H1 (cell line): ENCODE measurements at regions of chr2 and their contacts with region 1.

Region 1: GRCh38 chr2:216519154-216519762 is 20.6 kb downstream of the RPL37A start:
- DNase-seq: peak in 1 of 2 experiments; percentile 61
- H3K4me3 ChIP-seq: no peak overlapping the region
- H3K27ac ChIP-seq: no peak overlapping the region
- H3K4me1 ChIP-seq: no peaks in the 10 kb centered on the region; a peak in 1 of 7 replicates
- H3K27me3 ChIP-seq: no peaks in the 10 kb centered on the region
- CTCF ChIP-seq: peak in 2 of 3 experiments; percentile 73 to 76; a peak in 3 of 4 replicates
- EP300 ChIP-seq: no peak
- POLR2A ChIP-seq: no peak
- RAD21 ChIP-seq: peak; percentile 86 to 88

Region 2: DNA sequence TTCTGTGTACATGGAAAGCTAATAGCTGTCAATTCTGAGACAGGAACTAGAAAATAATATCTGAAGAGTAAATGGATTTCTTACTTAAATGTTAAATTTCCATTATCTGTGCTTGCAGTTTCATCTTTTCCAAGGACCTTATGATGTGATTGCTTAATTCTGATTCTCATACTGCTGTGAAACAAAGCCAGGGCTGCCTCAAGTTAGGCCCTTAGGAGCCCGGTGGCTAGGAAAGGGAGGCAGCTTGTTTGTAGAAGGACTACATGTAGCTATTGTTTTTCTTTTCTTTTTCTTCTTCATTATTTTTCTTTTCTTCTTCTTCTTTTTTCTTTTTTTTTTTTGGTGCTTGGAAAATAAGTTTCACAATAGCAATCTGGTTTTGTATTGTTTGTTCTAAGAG is 359.6 kb before region 1 on chr2:
- CTCF ChIA-PET with region 1: no interaction called
- POLR2A ChIA-PET with region 1: no interaction called
- DNase-seq: no peak
- H3K4me3 ChIP-seq: no peak overlapping the region
- H3K27ac ChIP-seq: no peak overlapping the region
- H3K4me1 ChIP-seq: no peaks in the 10 kb centered on the region
- H3K27me3 ChIP-seq: no peaks in the 10 kb centered on the region
- CTCF ChIP-seq: no peak
- EP300 ChIP-seq: no peak
- POLR2A ChIP-seq: no peak
- RAD21 ChIP-seq: no peak

Region 3: DNA sequence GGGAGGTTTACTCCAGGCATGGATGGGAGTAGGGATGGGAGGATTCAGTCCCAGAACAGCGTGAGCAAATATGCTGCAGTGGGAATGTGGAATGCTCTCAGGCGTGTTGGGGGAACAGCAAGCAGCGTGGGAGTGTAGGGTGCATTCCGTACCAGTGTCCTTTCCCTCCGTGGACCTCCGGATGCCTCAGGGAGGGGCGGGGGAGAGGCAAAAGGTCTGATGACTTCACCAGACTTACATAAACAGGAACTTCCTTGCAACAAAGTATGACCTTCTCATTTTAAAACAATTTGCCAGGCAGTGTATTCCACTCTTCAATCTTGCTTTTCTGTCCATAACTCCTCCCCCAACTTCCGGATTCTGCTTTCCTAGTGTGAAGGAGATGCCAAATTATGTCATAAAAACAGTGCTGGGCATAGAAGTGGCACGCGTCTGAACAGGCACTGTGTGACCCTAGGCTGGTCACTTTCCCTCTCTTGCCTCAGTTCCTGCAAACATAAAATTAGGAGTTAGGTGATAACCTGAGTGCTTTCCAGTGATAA is 16.3 kb after region 1 on chr2:
- CTCF ChIA-PET with region 1: interaction called, 46 read pairs
- POLR2A ChIA-PET with region 1: no interaction called
- DNase-seq: no peak
- H3K4me3 ChIP-seq: no peak overlapping the region
- H3K27ac ChIP-seq: no peak overlapping the region
- H3K4me1 ChIP-seq: no peaks in the 10 kb centered on the region; a peak in 1 of 7 replicates
- H3K27me3 ChIP-seq: no peaks in the 10 kb centered on the region; a peak in 1 of 7 replicates
- CTCF ChIP-seq: no peak
- EP300 ChIP-seq: no peak
- POLR2A ChIP-seq: no peak
- RAD21 ChIP-seq: no peak

Region 4: DNA sequence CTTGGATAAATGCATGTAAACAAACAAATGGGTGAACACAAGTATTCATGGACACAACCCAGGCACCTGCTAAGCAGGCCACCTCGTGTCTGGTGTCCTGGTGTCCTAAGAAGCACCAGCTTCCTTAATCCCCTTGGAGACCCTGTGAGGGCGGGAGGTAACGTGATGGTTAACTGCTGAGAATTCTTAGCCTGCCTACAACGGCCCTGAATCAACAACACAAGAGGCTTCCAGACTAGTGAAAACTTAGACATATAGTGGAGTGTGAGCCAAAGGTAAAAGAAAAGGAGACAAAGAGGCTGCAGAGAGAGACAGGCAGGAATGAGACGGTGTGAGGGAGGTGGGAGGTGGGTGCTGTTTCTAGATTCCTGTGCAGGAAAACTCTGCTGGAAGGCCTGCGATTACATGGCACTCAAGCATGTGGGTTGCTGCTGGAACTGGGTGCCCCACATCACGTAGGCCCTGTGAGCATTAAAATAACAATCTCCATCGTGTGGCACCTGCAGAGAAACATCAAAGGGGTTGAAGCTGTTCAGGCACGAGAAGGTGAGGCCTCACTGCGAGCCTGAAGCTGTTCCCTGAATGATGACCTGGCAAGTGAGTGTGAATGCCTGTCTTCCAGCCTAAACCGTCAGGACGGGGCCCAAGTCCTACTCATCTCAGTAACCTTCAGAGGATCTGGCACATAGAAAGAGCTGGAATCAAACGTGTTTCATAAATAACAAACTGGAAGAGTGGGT is 43.6 kb after region 1 on chr2:
- CTCF ChIA-PET with region 1: interaction called, 58 read pairs
- POLR2A ChIA-PET with region 1: interaction called, 4 read pairs
- DNase-seq: no peak
- H3K4me3 ChIP-seq: no peak overlapping the region
- H3K27ac ChIP-seq: no peak overlapping the region
- H3K4me1 ChIP-seq: peaks cover 2 to 14% (median 9%) of the 10 kb centered on the region in 4 experiments; a peak in 5 of 7 replicates
- H3K27me3 ChIP-seq: no peaks in the 10 kb centered on the region
- CTCF ChIP-seq: no peak
- EP300 ChIP-seq: no peak
- POLR2A ChIP-seq: no peak
- RAD21 ChIP-seq: no peak

Region 5: DNA sequence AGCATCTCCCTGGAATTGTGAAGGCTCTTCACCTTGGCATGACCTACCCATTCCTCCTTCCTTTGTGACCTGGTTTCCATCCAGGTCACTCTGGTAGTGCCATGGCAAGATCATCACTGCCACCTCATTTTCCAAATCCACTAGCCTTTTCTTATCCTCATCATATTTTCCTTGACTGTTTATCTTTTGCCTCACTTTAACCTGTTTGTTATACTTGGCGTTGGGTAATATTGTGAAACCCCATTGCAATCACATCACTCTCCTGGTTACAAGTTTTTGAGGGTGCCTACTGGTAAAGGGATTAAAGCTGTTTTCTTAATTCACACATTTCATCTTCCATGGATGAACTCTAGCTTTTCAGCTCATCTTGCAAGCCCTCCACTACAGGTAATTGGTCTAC is 74.8 kb after region 1 on chr2:
- CTCF ChIA-PET with region 1: interaction called, 16 read pairs
- POLR2A ChIA-PET with region 1: no interaction called
- DNase-seq: no peak
- H3K4me3 ChIP-seq: no peak overlapping the region
- H3K27ac ChIP-seq: no peak overlapping the region
- H3K4me1 ChIP-seq: peaks cover under 1 to 9% (median 5%) of the 10 kb centered on the region in 4 experiments; a peak in 3 of 7 replicates
- H3K27me3 ChIP-seq: no peaks in the 10 kb centered on the region
- CTCF ChIP-seq: no peak
- EP300 ChIP-seq: no peak
- POLR2A ChIP-seq: no peak
- RAD21 ChIP-seq: no peak

Region 6: GRCh38 chr2:216632952-216633615 is 113.8 kb after region 1 on chr2 and contains the start of gene IGFBP2:
- CTCF ChIA-PET with region 1: interaction called, 54 read pairs
- POLR2A ChIA-PET with region 1: interaction called, 3 read pairs
- DNase-seq: peak in 1 of 2 experiments; percentile 83
- H3K4me3 ChIP-seq: peak within 1 kb of the TSS; percentile 71 to 93 (median 86)
- H3K27ac ChIP-seq: peak within 1 kb of the TSS; percentile 35; the same call in 1 of the 2 replicates
- H3K4me1 ChIP-seq: peaks cover 14 to 25% (median 18%) of the 10 kb centered on the region in 4 experiments
- H3K27me3 ChIP-seq: peaks cover 0 to 8% (median 6%) of the 10 kb centered on the region in 4 experiments; a peak in 3 of 7 replicates
- CTCF ChIP-seq: 0 out of 4 replicates have a peak, but pooled peaks of 1 of the 3 experiments have one; percentile 6
- EP300 ChIP-seq: no peak
- POLR2A ChIP-seq: peak; percentile 44 to 67
- RAD21 ChIP-seq: peak in 1 of 2 experiments; percentile 10; a peak in 1 of 4 replicates
- total RNA-seq, gene IGFBP2: 322 and 326 TPM in 2 replicates

Region 7: DNA sequence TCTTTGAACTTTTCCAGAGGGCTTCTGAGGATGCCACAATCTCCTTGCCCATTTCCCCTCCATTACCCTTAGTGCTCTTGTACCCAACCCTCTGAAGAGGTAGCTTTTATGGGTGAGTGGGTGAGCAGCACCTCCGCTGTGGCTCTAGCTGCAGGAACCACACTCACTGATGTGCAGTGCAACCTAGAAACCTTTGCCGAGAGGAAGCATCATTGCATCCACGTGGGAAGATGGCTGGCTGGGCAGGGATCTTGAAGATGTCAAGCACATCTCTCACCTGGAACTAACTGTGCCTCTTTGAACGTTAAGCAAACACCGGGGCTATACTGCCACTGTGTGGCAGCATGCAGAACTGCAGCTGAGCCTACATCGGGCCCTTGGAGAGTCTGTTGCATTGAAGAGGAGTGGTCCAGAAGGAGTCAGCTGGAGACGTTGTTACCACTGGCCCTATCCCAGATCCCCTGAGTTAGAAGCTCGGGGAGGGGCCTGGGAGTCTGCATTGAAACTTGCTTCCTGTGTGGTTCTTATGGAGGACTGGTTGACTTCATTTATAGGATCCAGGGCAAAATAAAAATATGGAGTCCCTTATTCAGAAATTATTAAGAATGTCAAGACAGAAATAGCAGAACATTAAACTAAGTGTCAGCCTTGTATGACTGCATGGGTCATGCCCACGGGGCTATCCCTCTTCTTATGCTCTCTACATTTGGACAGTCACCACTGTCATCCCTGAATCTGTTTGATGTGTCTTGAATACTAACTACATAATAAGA is 147.4 kb after region 1 on chr2:
- CTCF ChIA-PET with region 1: interaction called, 493 read pairs
- POLR2A ChIA-PET with region 1: interaction called, 5 read pairs
- DNase-seq: peak; percentile 71 to 92
- H3K4me3 ChIP-seq: no peak overlapping the region; a peak in 1 of 8 replicates
- H3K27ac ChIP-seq: no peak overlapping the region
- H3K4me1 ChIP-seq: peaks cover 0 to 13% (median 10%) of the 10 kb centered on the region in 4 experiments; a peak in 6 of 7 replicates
- H3K27me3 ChIP-seq: no peaks in the 10 kb centered on the region
- CTCF ChIP-seq: peak; percentile 90 to 100 (median 98)
- EP300 ChIP-seq: no peak
- POLR2A ChIP-seq: no peak
- RAD21 ChIP-seq: peak; percentile 100

Region 8: GRCh38 chr2:216687646-216688045 is 168.4 kb after region 1 on chr2:
- CTCF ChIA-PET with region 1: interaction called, 13 read pairs
- POLR2A ChIA-PET with region 1: no interaction called
- DNase-seq: peak in 1 of 2 experiments; percentile 92
- H3K4me3 ChIP-seq: no peak overlapping the region
- H3K27ac ChIP-seq: no peak overlapping the region
- H3K4me1 ChIP-seq: peaks cover 9 to 18% (median 12%) of the 10 kb centered on the region in 4 experiments; a peak in 6 of 7 replicates
- H3K27me3 ChIP-seq: peaks cover 0 to 12% (median 4%) of the 10 kb centered on the region in 4 experiments; a peak in 5 of 7 replicates
- CTCF ChIP-seq: peak; percentile 89 to 92 (median 90)
- EP300 ChIP-seq: no peak
- POLR2A ChIP-seq: no peak
- RAD21 ChIP-seq: peak; percentile 65 to 81

Region 9: DNA sequence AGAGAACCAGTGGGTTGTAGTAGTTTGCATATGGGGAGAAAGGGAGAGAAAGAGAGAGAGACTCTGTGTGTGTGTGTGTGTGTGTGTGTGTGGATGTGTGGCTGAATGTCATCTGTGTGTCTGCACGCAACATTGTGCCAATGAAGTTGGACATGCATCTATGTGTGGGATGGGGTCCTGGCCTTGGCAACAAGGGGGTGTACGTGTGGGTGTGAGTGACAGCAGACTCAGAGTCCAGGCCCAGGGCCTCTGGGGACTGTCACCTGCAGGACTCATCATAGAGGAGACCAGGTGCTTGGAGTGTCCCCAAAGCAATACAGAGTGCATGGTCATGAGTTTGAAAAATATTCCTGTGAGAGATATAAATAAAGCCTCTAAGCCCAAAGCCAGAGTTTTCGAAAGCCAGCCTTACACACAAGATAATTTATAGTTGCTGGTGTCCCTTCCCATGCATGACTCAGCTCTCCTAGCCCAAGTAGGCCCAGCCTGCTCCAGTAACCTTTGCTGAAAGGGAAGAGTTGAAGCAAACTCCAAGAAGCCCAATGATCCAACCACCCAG is 280.7 kb after region 1 on chr2:
- CTCF ChIA-PET with region 1: no interaction called
- POLR2A ChIA-PET with region 1: no interaction called
- DNase-seq: no peak
- H3K4me3 ChIP-seq: no peak overlapping the region
- H3K27ac ChIP-seq: no peak overlapping the region
- H3K4me1 ChIP-seq: no peaks in the 10 kb centered on the region
- H3K27me3 ChIP-seq: no peaks in the 10 kb centered on the region
- CTCF ChIP-seq: no peak
- EP300 ChIP-seq: no peak
- POLR2A ChIP-seq: no peak
- RAD21 ChIP-seq: no peak

Region 10: DNA sequence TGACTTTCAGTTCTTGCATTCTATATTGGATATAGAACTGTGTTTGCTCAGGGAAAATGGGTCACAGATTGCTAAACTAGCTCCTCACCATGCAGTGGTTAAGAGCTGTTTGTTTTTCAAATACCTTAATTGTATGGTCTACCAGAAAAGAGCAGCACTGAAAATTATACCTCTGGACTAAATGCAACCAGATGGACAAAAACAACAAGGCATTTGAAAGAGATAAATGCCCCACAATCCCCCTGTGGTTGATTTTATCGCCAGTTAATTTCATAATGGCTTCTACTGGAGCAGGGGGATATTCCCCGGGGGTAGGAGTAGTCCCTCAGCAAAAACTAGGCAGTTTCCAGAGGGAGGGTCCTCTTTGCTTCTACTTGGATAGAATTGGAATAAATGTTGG is 608.5 kb after region 1 on chr2:
- CTCF ChIA-PET with region 1: no interaction called
- POLR2A ChIA-PET with region 1: no interaction called
- DNase-seq: no peak
- H3K4me3 ChIP-seq: no peak overlapping the region
- H3K27ac ChIP-seq: no peak overlapping the region
- H3K4me1 ChIP-seq: no peaks in the 10 kb centered on the region
- H3K27me3 ChIP-seq: no peaks in the 10 kb centered on the region
- CTCF ChIP-seq: no peak
- EP300 ChIP-seq: no peak
- POLR2A ChIP-seq: no peak
- RAD21 ChIP-seq: no peak